GM12878 (cell line): ENCODE measurements at regions of chr12 and their contacts with region 1.

Region 1: DNA sequence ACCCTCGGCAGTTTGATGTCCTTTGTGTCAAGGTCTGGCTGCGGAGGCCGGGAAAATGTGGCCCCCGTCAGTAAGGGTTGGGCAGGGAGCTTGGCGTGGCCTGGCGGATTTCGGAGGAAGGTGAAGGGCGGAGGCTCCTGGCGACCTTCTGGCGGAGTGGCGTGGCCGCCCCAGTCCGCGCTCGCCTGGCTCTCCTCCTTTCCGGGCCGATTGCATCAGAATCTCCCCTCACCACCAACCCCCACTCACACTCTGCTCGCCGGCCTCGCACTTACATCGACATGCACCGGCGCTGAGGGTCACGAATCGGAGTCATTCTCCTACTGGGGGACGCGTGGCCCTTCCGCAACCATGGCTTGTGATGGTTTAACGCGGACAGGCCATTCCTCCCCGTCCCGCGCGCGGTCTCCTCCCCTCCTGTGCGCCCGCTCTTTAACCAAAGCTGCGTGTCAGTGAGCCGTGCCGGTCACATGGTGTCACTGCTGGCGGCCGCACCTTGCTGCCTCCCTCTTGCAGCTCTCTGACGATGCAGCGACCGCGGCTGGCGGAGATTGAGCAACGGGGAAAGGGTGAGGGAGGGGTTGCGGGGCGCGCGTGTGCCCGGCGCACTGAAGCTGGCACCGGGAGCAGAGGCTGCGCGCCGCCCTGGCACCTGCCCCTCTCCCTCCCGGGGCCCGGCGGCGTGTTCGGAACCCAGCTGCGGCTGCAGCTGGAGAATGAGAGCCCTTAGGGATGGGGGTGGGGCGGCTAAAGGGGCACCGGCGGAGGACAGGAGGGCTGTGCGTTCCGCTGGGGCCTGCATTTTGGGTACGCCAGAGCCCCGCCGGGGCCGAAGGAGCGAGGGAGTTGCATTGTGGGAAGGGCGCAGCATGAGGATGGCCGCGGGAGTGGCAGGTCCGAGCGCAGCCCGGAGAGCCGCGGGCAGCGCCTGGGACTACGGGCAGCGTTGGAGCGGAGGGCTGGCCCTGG is at the start of gene SLC38A1:
- DNase-seq: no peak
- ATAC-seq: peak; percentile 75
- H3K4me3 ChIP-seq: peak within 1 kb of the TSS; percentile 82
- H3K27ac ChIP-seq: peak within 1 kb of the TSS; percentile 95
- H3K4me1 ChIP-seq: peaks cover 8% of the 10 kb centered on the region; the same call in 1 of the 2 replicates
- H3K27me3 ChIP-seq: no peaks in the 10 kb centered on the region
- CTCF ChIP-seq: peak in 1 of 3 experiments; percentile 11; a peak in 2 of 6 replicates
- EP300 ChIP-seq: no peak; a peak in 1 of 4 replicates
- POLR2A ChIP-seq: peak; percentile 97
- RAD21 ChIP-seq: peak; percentile 31; the same call in 1 of the 2 replicates
- polyA plus RNA-seq, gene SLC38A1: 38.1 to 64.0 TPM

Region 2: GRCh38 chr12:46071769-46072624 is 196.9 kb before region 1 on chr12:
- CTCF ChIA-PET with region 1: interaction called, 3 read pairs
- POLR2A ChIA-PET with region 1: no interaction called
- RAD21 ChIA-PET with region 1: interaction called, 5 read pairs
- SMC1A ChIA-PET with region 1: interaction called, 3 read pairs
- in situ Hi-C with region 1: no loop called
- intact Hi-C with region 1: loop called (anchors 5 kb)
- DNase-seq: peak; percentile 57
- ATAC-seq: peak; percentile 99
- H3K4me3 ChIP-seq: no peak overlapping the region
- H3K27ac ChIP-seq: peak overlapping the region; percentile 39; the same call in 1 of the 2 replicates
- H3K4me1 ChIP-seq: peaks cover 11% of the 10 kb centered on the region
- H3K27me3 ChIP-seq: no peaks in the 10 kb centered on the region
- CTCF ChIP-seq: peak; percentile 97 to 100 (median 99)
- EP300 ChIP-seq: no peak
- POLR2A ChIP-seq: no peak
- RAD21 ChIP-seq: peak; percentile 97

Region 3: GRCh38 chr12:46209914-46210872 is 58.7 kb before region 1 on chr12:
- CTCF ChIA-PET with region 1: interaction called, 45 read pairs
- POLR2A ChIA-PET with region 1: interaction called, 22 read pairs
- RAD21 ChIA-PET with region 1: interaction called, 60 read pairs
- SMC1A ChIA-PET with region 1: interaction called, 95 read pairs
- in situ Hi-C with region 1: no loop called
- intact Hi-C with region 1: no loop called
- DNase-seq: peak; percentile 68
- ATAC-seq: peak; percentile 84
- H3K4me3 ChIP-seq: no peak overlapping the region
- H3K27ac ChIP-seq: peak overlapping the region; percentile 85
- H3K4me1 ChIP-seq: peaks cover 59% of the 10 kb centered on the region
- H3K27me3 ChIP-seq: no peaks in the 10 kb centered on the region
- CTCF ChIP-seq: no peak
- EP300 ChIP-seq: peak; percentile 83 to 86
- POLR2A ChIP-seq: peak; percentile 52; the same call in 1 of the 2 replicates
- RAD21 ChIP-seq: no peak

Region 4: GRCh38 chr12:46303039-46303666 is 34.3 kb after region 1 on chr12:
- CTCF ChIA-PET with region 1: interaction called, 38 read pairs
- POLR2A ChIA-PET with region 1: no interaction called
- RAD21 ChIA-PET with region 1: interaction called, 7 read pairs
- SMC1A ChIA-PET with region 1: interaction called, 28 read pairs
- in situ Hi-C with region 1: no loop called
- intact Hi-C with region 1: no loop called
- DNase-seq: peak; percentile 2
- ATAC-seq: peak; percentile 91
- H3K4me3 ChIP-seq: no peak overlapping the region
- H3K27ac ChIP-seq: no peak overlapping the region
- H3K4me1 ChIP-seq: no peaks in the 10 kb centered on the region
- H3K27me3 ChIP-seq: no peaks in the 10 kb centered on the region; a peak in 1 of 4 replicates
- CTCF ChIP-seq: peak; percentile 54 to 58 (median 57)
- EP300 ChIP-seq: no peak
- POLR2A ChIP-seq: no peak
- RAD21 ChIP-seq: peak; percentile 66

Region 5: DNA sequence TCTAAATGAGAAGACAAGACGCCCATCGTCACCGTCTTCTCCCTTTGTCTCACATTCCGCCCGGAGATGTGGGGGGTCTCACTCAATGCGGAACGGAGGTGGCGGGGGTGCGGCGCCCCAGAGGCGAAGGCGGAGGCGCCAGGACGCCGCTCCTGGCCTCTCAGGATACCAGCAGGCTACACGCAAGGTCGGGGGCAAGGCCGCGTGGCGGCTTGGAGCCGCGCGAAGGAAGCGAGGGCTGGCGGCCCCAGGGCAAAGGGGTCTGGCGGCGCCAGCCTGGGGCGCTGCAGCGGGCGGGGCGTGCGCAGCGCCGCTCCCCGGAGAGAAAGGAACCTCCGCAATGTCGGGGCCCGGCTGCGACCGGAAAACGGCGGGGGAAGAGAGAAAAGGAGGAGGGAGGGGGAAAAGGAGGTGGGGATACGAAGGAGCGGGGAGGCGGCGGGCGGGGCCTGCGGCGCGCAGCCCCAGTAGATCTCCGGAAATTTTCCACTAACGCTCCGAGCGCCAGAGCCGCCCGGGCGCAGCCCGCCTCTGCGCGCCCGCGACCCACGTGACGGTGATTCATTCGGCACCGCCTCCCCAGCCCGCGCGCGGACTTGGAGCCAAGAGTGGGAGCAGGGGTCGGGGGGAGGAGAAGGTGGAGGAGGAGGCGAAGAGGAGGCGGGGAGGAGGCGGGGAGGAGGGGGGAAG is 114.2 kb after region 1 on chr12:
- CTCF ChIA-PET with region 1: interaction called, 5 read pairs
- POLR2A ChIA-PET with region 1: interaction called, 5 read pairs
- RAD21 ChIA-PET with region 1: interaction called, 3 read pairs
- SMC1A ChIA-PET with region 1: interaction called, 8 read pairs
- in situ Hi-C with region 1: no loop called
- intact Hi-C with region 1: loop called (anchors 5 kb)
- DNase-seq: peak; percentile 81
- ATAC-seq: peak; percentile 80
- H3K4me3 ChIP-seq: peak overlapping the region; percentile 80
- H3K27ac ChIP-seq: peak overlapping the region; percentile 89
- H3K4me1 ChIP-seq: peaks cover 23% of the 10 kb centered on the region
- H3K27me3 ChIP-seq: no peaks in the 10 kb centered on the region
- CTCF ChIP-seq: peak; percentile 19 to 39 (median 34); a peak in 4 of 6 replicates
- EP300 ChIP-seq: no peak; a peak in 2 of 4 replicates
- POLR2A ChIP-seq: peak; percentile 81
- RAD21 ChIP-seq: peak; percentile 39

Region 6: DNA sequence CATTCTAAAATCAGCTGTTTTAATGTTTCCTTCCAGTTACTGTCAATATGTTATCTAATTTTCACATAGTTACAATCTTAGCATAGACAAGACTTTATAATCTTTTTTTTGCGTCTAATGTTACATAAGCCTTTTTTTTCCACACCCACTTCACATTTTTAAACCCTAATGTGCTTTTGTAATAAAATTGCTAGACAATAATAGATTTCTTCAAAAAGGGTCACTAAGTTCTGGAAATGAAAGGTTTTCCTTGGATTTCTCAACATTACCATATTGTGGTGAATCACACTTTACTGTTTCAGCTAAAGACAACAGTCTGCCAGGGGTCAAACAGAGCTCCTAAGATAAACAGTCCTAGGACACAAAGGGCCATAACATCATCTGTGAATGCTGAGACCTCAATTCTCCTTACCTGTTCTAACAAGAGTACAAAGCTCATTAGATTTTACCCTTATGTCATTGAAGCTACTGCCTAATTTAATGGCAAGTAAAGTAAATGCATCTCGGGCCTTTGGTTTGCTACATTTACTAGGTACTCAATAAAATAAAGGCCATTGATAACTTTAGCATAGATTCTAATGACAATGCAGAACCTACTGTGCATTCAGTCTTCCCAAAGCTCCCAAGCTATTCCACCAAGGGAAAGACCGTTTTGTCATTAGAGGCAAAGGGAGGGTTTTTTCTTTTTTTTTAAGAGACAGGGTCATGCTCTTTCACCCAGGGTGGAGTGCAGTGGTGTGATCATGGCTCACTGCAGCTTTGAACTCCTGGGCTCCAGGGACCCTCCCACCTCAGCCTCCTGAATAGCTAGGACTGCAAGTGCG is 214.9 kb after region 1 on chr12:
- CTCF ChIA-PET with region 1: no interaction called
- POLR2A ChIA-PET with region 1: no interaction called
- RAD21 ChIA-PET with region 1: no interaction called
- SMC1A ChIA-PET with region 1: no interaction called
- in situ Hi-C with region 1: no loop called
- intact Hi-C with region 1: no loop called
- DNase-seq: no peak
- ATAC-seq: no peak
- H3K4me3 ChIP-seq: no peak overlapping the region
- H3K27ac ChIP-seq: no peak overlapping the region
- H3K4me1 ChIP-seq: no peaks in the 10 kb centered on the region
- H3K27me3 ChIP-seq: no peaks in the 10 kb centered on the region
- CTCF ChIP-seq: no peak
- EP300 ChIP-seq: no peak
- POLR2A ChIP-seq: no peak
- RAD21 ChIP-seq: no peak